ENCODE measurements at regions of chr1 and their contacts with region 1.

Region 1: DNA sequence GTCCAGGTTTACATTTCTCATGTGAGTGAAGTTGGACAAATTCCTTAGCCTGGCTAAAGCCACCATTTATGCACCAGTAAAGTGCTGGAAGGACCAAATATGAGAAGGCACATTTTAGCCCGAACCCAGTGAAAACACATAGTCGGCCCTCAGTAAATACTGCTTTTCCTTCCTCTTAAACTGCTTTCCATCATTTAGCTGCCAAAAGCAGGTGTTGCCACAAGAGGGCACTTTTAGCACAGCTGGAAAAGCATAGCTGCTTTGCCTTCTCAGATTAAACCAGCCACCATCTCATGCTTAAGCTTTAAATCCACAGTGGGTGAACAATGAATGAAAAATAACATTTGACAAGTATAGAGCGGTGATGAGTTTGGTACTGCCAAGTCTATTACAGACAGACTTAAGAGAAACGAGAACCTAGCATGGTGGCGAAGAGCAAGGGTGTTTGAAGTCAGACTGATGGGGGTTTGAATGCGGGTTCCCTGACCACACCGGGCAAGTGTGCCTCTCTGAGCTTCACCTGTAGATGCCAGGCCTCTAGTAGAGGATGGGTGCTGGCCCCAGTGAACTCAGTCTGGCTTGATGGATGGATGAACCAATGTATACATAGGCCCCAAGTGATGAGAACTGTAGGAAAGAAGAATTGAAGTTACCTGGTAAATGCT is 57.8 kb downstream of the SLC35D1 start:
- DNase-seq: peak; percentile 45
- ATAC-seq: peak; percentile 63 to 70

Region 2: DNA sequence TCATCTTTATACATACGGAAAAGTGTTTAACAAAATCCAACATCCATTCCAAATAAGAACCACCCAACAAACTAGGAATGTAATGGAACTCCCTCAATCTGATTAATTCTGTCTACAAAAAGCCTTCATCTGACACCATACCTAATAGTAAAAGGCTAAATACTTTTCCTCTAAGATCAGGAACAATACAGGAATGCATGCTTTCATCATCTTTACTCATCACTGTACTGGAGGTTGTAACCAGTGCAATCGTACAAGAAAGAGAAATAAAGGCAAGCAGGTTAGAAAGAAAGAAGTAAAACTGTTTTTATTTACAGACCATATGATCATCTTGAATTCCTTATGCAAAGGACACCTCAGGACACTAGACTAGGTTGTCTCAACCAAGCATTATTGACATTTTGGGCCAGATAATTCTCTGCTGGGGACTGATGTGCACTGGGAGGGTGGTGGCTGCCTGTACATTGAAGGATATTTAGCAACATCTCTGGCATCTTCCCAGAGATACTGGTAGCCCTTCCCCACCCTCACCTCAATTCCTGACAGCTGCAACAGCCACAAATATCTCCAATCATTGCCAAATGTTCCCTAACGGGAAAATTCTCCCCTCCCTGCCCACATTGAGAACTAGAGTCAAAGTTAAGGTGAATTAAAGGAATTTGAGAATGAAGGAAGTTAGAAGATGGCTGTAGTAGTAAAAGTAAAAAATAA is 164.5 kb before region 1 on chr1:
- intact Hi-C with region 1: no loop called
- DNase-seq: no peak
- ATAC-seq: no peak

Region 3: GRCh38 chr1:67149179-67149770 is 153.1 kb after region 1 on chr1:
- intact Hi-C with region 1: loop called (anchors 1 to 10 kb)
- DNase-seq: peak; percentile 61
- ATAC-seq: peak; percentile 91 to 96

Region 4: GRCh38 chr1:67214420-67215174 is 218.4 kb after region 1 on chr1:
- intact Hi-C with region 1: loop called in 1 of 2 experiments (anchors 5 kb)
- DNase-seq: no peak
- ATAC-seq: no peak

Region 5: GRCh38 chr1:67250051-67250653 is 254.0 kb after region 1 on chr1:
- intact Hi-C with region 1: no loop called
- DNase-seq: no peak
- ATAC-seq: no peak

Measured in left cardiac atrium (tissue), 4 donors.